Right ventricle myocardium inferior (tissue), 1 donor: ENCODE measurements at regions of chr6 and their contacts with region 1.

Region 1: DNA sequence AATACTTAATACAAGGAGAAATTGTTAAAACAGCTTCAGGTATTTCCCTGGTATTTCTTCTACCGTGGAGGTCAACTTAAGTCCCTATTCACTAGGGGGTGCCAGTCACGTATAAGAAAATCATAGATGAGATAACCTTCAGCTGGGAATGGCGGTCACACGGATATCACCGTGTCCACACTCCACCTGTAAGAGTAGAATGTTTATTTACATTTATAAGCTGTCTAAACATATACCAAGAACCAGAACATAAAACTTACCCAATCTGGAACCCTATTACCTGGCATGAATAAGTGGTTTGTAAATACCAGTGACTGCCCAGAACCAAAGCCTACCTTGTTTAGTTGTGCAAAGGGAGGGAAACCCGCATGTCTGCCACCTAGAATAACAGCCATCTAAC is 1.9 kb upstream of the ELOVL4 start:
- DNase-seq: no peak
- ATAC-seq: no peak

Region 2: GRCh38 chr6:79928478-79928998 is 20.7 kb before region 1 on chr6:
- intact Hi-C with region 1: no loop called
- DNase-seq: no peak
- ATAC-seq: no peak

Region 3: DNA sequence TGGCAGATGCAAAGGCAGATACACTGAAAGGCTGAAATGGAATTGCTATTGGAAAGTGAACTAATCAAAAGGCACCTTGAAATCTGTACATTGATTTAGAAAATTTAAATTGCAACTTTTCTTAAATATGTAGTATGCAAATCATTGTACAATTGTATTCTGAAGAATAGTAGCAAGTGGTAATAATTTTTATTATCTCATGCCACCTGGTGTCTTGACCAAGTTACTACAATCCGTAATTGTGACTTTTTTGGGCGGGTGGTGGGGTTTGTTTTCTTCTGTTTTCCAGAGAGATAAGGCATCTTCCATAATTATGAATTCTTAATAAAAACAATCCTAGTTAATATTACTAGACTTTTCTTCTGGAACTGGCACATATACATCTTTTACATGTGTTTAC is 144.8 kb after region 1 on chr6:
- intact Hi-C with region 1: loop called (anchors 10 kb)
- DNase-seq: no peak
- ATAC-seq: no peak